ENCODE measurements at regions of chr6 and their contacts with region 1.

Region 1: DNA sequence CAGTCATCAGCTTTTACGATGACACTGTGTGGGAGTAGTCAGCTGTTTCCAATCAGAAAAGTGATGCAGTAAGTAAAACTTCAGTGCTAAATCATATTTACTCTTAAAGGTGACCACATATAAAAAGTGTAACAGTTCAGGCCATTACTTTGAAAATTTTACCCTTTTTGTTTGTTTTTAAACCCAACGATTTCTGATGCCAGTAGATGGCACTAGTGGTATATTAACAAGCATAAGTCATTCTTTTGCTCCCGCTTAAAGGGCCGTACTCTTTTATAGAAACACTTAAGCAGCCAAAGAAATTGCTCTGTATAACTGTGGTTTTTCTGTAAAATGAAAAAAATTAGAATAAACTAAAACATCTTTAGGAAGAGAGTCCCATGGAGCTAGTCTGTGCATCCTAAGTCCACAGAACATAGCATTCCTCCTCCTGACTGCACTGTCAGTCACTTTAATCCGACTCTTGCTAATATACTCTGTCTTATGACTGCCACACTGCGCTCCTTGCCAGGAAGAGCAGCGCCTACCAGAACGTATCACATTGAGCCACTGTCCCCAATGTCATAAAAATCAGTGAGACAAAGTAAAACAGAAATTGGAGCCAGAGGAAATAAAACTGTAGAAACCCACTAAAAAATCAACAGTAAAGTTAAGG is 25.0 kb downstream of the HEBP2 start:
- DNase-seq: no peak
- H3K4me3 ChIP-seq: no peak overlapping the region
- H3K27ac ChIP-seq: no peak overlapping the region
- H3K4me1 ChIP-seq: peaks cover 0 to 16% (median 3%) of the 10 kb centered on the region in 4 donors
- H3K27me3 ChIP-seq: no peaks in the 10 kb centered on the region
- CTCF ChIP-seq: peak; percentile 58 to 66 (median 65)
- EP300 ChIP-seq: no peak
- POLR2A ChIP-seq: no peak

Region 2: DNA sequence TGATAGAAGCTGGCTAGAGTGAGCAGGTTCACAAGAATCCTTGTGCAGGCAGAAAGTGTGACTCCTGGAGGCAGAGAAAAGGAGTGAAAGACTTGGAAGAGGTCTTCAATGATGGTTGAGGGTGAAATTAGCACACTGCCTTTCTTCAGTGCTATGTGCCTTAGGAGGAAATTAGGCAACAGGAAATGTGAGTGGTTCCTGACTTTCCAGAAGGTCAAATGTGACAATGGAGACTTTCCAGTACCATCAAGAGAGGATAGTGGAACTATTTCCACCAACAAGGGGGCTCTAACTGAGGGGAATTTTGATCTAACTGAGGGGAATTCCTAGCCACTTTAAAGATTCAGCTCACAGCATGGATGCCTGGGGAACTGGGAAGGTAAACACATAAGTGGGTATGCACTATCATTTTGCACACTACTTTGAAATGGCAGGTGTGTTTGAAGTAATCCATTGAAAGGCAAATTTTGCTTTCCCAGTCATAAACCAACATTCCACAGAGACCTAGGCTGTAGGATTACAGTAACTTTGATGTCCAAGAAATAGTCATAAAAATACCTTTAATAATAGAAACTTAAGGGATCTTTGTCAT is 411.8 kb before region 1 on chr6:
- in situ Hi-C with region 1: no loop called
- intact Hi-C with region 1: no loop called
- DNase-seq: no peak
- H3K4me3 ChIP-seq: no peak overlapping the region
- H3K27ac ChIP-seq: no peak overlapping the region
- H3K4me1 ChIP-seq: peaks cover 0 to 10% (median 0%) of the 10 kb centered on the region in 4 donors
- H3K27me3 ChIP-seq: no peaks in the 10 kb centered on the region
- CTCF ChIP-seq: no peak
- EP300 ChIP-seq: no peak
- POLR2A ChIP-seq: no peak

Region 3: DNA sequence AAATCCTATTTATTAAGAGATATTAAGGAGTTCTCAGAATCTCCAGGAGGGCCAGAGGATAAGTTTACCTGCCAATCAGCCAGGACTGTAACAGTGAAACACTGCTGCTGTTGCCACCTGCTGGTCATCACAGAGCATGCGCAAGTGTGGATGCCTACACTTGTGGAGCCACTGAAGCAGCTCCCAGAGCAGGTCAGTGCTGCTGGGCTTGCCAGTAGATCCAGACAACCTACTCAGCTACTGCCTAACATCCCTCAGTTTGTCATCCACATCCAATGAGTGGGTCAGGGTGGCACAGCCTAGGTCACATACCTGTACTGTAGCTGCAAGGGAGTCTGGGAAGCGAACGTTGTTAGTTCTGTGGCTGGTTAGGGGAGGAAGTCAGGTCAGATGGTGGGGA is 88.6 kb after region 1 on chr6:
- in situ Hi-C with region 1: loop called in 3 of 4 experiments (anchors 5 to 10 kb)
- intact Hi-C with region 1: no loop called
- DNase-seq: peak; percentile 63
- H3K4me3 ChIP-seq: no peak overlapping the region
- H3K27ac ChIP-seq: no peak overlapping the region
- H3K4me1 ChIP-seq: peaks cover 0 to 6% (median 0%) of the 10 kb centered on the region in 4 donors
- H3K27me3 ChIP-seq: no peaks in the 10 kb centered on the region
- CTCF ChIP-seq: peak; percentile 57 to 74 (median 66)
- EP300 ChIP-seq: no peak
- POLR2A ChIP-seq: no peak

Region 4: DNA sequence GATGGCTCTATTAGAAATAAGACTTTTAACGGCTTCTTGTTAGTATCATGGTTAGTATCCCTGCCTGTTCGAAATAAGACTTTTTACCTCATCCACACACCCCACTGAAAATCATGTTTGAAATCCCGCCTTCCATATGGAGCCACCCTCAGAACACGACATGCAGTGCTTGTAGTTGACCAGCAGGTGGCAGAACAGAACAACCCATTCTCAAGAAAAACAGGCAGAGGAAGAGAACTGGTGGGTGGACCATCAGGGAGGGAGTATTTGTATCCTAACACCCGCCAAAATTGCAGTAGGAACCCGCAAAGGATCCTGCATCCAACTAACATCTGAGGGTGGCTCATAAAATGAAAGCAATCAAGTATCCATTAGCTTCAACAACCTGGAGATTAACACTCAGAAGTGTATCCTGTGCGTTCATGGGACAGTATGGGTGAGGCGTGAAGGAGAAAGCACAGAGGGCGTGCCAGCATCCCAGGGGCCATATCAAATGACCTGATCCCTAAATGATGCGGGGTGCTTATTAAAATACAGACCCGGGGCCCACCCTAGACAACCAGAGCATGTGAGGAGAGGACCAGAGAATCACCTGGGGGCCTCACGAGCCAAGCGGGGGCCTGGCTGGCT is 159.8 kb after region 1 on chr6:
- in situ Hi-C with region 1: loop called (anchors 5 to 25 kb)
- intact Hi-C with region 1: loop called (anchors 5 kb)
- DNase-seq: peak; percentile 52
- H3K4me3 ChIP-seq: no peak overlapping the region
- H3K27ac ChIP-seq: no peak overlapping the region
- H3K4me1 ChIP-seq: peaks cover 3 to 29% (median 12%) of the 10 kb centered on the region in 4 donors
- H3K27me3 ChIP-seq: no peaks in the 10 kb centered on the region
- CTCF ChIP-seq: peak; percentile 86 to 91 (median 90)
- EP300 ChIP-seq: no peak
- POLR2A ChIP-seq: no peak

Region 5: DNA sequence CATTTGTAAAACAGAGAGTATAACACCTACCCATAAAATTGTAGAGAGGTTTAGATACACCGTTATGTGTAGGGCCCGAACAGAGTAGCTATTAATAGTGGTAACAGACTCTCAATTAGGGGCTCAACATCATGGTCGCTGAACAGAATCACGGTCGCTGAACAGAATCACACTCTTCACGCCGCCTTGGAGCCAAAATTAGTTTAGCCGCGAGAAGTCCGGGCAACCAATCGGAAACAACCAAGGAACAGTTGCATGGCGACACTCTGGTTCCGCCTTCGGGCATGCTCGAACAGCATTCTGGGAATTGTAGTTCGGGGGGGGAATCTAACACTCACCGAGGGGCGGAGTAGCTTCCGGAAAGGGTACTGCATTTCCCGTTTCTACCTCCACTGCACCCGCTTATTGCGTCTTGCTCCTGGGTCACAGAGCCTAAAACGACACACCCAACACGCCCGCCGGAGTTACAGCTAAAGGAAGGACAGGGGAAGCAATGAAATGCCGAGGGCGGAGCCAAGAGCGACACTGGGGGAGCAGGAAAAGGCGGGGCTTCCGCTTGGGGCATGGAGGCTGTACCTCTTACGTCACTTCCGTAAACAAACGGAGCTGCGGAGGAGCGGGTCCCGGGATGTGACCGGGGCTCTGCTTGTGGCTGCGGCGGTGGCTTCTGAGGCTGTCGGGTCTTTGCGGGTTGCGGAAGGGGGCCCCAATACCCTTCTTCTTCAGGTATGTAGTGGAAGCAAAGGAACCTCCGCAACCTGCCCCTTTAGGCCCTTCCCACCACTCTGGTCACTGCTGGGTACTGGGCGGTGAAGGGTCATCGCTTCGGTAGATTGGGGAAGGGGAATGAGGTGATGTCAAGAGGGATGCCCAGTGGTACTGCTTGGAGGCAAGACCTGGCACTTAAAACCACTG is 344.4 kb after region 1 on chr6 and contains the start of gene CCDC28A:
- in situ Hi-C with region 1: loop called (anchors 25 kb)
- intact Hi-C with region 1: no loop called
- DNase-seq: peak; percentile 94
- H3K4me3 ChIP-seq: peak within 1 kb of the TSS; percentile 65 to 75 (median 69)
- H3K27ac ChIP-seq: peak within 1 kb of the TSS; percentile 89 to 96 (median 93)
- H3K4me1 ChIP-seq: peaks cover 0 to 19% (median 13%) of the 10 kb centered on the region in 4 donors
- H3K27me3 ChIP-seq: no peaks in the 10 kb centered on the region
- CTCF ChIP-seq: peak in 2 of 5 experiments; percentile 36
- EP300 ChIP-seq: no peak
- POLR2A ChIP-seq: peak; percentile 70
- total RNA-seq, gene CCDC28A: 12.0 to 31.4 (median 19.6) TPM

Region 6: DNA sequence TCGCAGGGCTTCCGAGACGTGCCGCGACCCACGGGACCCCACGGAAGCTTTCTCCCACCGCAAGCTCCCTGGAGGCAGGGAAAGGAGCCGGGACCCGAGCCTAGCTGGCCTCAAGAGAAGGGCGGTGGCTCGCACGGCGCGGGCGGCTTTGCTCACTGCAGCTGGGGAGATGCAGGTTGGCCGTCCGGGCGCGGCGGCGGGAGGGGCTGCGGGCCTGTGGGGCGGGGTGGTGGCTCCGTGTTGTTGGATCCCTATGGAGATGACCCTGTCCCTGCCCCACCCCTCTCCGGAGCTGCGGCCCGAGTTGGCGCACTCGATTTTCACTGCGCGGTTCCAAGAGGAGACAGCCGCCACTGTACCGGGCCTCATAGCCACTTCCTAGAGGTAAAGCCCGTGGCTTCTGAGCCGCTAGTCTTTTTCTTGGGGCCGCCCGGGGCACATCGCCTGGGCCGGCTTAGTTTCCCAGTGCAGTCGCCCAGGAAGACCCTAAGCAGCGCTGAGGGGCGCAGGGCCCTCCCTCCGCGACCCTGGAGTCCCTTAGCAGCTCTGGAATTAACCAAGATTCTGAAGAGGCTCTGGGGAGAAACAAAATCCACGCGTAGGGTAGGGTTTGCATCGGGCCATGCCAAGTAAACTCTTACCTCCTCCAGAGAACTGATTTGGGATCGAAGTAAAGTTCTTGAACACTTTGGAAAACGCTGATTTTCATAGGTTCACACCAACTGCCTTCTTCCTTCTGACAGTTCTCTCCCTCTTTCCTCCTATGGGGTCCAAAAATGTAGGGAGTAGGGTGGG is 366.9 kb after region 1 on chr6 and contains the start of gene ECT2L:
- in situ Hi-C with region 1: no loop called
- intact Hi-C with region 1: no loop called
- DNase-seq: peak; percentile 83
- H3K4me3 ChIP-seq: peak within 1 kb of the TSS in 3 of 4 donors; percentile 25 to 55 (median 37)
- H3K27ac ChIP-seq: peak within 1 kb of the TSS; percentile 44 to 81 (median 69)
- H3K4me1 ChIP-seq: peaks cover 0 to 17% (median 11%) of the 10 kb centered on the region in 4 donors
- H3K27me3 ChIP-seq: no peaks in the 10 kb centered on the region
- CTCF ChIP-seq: no peak
- EP300 ChIP-seq: no peak
- POLR2A ChIP-seq: peak; percentile 63
- total RNA-seq, gene ECT2L: 0.16 TPM in 1 of 4 donors, not detected in the others

Measured in transverse colon (tissue), 4 donors.